HEK293 (cell line): ENCODE measurements at regions of chr17 and their contacts with region 1.

Region 1: DNA sequence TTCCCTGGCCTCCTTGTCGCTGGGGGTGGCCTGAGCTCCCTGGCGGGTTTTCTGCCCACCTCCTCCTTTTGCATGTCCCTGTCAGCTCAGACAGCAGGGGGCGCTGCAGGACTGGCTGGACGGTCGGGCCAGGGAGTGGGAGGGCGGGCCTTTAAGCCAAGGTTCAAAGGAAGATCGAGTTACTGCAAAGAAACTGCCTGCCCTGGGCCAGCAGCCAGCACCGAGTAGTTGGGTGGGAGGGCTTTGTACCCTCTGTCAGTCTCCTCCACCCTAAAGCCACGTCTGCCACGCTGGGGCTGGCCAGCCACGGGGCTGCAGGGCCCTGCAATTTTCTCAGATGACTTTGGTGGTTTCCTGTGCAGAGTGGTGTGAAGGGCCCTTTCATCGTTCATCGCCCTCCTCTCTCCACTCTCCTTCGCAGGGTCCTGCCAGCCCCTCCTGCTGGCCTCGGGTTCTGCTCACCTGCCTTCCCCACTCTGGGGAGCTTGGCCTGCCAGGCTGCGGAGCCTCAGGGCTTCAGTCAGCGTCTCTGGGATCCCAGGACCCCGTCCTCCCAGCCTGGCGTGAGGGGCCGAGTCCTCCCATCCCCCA is 12.3 kb downstream of the GPR142 start:
- H3K4me3 ChIP-seq: no peak overlapping the region
- H3K27ac ChIP-seq: no peak overlapping the region
- H3K4me1 ChIP-seq: peaks cover 6% of the 10 kb centered on the region
- CTCF ChIP-seq: peak; percentile 83

Region 2: GRCh38 chr17:74394977-74395376 is 15.4 kb after region 1 on chr17:
- CTCF ChIA-PET with region 1: interaction called, 34 read pairs
- POLR2A ChIA-PET with region 1: no interaction called
- H3K4me3 ChIP-seq: no peak overlapping the region
- H3K27ac ChIP-seq: no peak overlapping the region
- H3K4me1 ChIP-seq: no peaks in the 10 kb centered on the region
- CTCF ChIP-seq: no peak

Region 3: DNA sequence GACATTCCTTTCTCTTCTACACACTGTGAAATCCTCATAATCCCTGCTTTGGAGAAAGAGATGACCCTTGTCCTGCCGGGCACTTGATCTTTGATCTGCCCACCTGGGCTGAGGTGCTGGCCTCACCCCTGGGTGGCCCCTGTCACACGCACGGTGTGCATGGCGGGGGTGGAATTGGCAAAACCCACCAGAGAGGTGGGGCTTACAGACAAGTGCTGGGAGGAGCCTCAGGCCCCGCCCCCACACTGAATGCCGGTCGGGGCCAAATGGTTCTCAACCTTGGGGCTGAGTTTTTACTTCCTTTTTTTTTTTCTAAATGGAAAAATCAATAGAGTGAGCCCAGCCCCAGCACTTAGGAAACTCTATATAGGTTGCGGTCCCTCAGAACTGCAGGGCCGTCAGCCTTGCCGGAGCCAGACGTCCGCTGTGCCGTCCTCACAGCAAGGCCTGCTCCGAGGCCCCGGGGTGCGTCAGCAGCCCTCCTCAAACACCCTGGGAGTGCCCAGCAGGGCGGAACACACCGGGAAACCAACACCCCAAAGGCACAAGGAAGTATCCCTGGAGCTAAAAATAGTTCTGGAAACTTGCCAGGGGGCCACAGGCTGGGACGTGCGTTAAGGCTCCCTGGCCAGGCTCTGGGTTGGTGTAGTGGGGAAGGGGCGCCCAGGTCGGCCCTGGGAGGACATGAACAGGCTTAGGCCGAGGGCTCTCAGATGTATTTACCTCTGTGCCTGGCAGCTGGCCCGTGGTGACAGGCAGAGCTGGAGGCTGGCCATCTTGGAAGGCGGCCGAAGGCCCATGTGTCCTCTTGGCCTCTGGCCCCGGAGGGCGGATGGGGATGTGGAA is 63.3 kb after region 1 on chr17:
- CTCF ChIA-PET with region 1: interaction called, 57 read pairs
- POLR2A ChIA-PET with region 1: no interaction called
- H3K4me3 ChIP-seq: no peak overlapping the region
- H3K27ac ChIP-seq: peak overlapping the region; percentile 73
- H3K4me1 ChIP-seq: peaks cover 5% of the 10 kb centered on the region; the same call in 1 of the 2 replicates
- CTCF ChIP-seq: no peak

Region 4: DNA sequence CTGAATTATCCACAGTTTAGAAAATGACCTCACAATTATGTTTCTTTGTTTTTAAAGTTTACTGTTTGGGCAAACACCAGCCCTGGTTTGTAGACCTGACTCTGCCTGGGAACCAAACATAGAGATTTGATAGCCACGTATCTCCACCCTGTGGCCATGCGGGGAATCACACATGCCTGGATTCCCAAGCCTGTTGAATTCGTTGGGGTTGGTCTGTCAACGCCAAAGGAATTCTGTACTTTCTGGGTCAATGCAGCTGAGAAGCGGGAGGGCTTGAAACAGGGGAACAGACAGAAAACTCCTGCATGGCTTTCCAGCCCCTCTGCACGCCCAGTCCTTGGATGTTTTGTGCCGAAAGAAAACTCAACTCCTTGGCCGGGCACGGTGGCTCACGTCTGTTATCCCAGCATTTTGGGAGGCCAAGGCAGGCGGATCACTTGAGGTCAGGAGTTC is 113.8 kb after region 1 on chr17:
- CTCF ChIA-PET with region 1: interaction called, 55 read pairs
- POLR2A ChIA-PET with region 1: no interaction called
- H3K4me3 ChIP-seq: no peak overlapping the region
- H3K27ac ChIP-seq: no peak overlapping the region
- H3K4me1 ChIP-seq: no peaks in the 10 kb centered on the region
- CTCF ChIP-seq: 0 out of 2 replicates have a peak, but pooled peaks have one; percentile 40